MCF 10A (cell line): ENCODE measurements at regions of chr5 and their contacts with region 1.

Region 1: DNA sequence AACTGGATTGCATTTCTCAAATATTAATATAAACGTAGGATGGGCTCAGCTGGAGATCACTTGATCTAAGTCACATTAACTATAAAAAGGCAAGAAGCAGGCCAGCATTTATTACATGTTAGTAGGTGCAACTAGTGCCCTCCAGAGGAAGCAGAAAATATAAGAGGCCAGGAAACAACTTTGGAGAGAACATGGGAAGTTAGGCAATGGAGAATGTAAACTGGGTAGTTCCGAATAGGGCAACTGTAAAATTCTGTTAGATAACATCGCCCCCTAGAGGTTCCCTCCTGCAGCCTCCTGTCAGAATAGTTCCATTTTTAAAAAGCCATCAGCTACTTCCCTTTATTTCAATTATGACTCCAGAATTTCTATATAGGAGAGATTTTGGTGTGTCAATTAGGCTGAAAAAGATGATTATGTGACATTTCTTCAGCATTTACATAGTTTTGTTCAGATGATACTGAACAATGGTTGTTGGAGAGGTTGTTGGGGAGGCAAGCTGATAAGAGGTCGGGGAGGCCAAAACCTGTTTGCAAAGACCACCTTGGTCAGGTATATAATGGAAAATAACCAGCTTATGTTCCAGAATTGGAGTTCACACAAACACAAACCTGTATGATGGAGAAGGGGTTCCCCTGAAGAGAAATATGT is 22.4 kb downstream of the CCL28 start:
- DNase-seq: peak; percentile 90
- H3K4me3 Mint-ChIP-seq: no peak overlapping the region
- H3K27ac Mint-ChIP-seq: no peak overlapping the region
- H3K4me1 Mint-ChIP-seq: no peaks in the 10 kb centered on the region
- H3K27me3 Mint-ChIP-seq: no peaks in the 10 kb centered on the region
- CTCF ChIP-seq: peak; percentile 78

Region 2: GRCh38 chr5:42908509-42909488 is 481.0 kb before region 1 on chr5:
- CTCF ChIA-PET with region 1: interaction called, 49 read pairs
- POLR2A ChIA-PET with region 1: interaction called, 4 read pairs
- intact Hi-C with region 1: loop called (anchors 1 kb)
- DNase-seq: peak; percentile 92
- H3K4me3 Mint-ChIP-seq: peak overlapping the region; percentile 80
- H3K27ac Mint-ChIP-seq: no peak overlapping the region
- H3K4me1 Mint-ChIP-seq: peaks cover 4% of the 10 kb centered on the region
- H3K27me3 Mint-ChIP-seq: no peaks in the 10 kb centered on the region
- CTCF ChIP-seq: peak; percentile 82

Region 3: DNA sequence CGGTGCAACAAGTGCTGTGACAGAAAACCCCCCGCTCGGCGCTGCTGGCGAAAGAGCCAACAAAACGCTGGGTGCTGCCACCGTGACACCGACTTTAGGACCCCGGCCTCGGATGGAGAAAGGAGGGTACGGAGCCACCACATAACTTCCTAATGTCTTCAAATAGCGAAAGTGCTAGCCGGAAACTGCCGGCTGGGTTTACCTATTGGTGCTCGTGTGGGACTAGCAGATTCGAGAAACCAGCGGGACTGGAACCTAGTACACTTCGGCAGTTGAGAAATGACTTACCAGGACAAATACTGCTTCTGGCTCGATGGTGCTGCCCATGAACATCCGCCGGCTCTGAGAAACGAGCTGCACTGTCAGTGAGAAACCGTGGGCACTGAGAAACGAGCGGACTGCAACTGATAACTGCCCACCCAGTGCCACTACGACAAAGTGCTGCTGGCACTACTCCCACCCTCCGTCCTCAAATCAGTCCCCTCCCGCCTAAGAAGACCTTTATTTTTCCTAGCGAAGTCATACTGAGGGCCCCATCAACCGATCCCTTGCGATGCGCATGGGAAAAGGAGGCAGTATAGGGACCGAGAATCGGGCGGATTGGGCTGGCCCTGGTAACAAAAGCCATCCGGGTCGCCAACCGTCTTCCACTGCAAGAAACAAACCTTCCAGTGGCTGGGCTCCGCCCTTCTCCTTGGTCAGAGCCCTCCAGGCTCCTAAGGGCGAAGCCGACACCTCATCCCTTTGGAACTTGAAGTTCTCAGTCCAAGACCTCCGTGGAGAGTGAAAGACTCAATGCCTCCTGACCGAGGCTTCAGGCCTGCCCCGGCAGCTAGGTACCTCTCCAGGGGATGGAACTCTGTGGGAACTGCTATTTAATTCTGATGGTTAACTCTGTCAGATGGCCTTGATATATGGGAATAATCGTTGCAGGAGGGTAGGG is 322.7 kb before region 1 on chr5:
- CTCF ChIA-PET with region 1: interaction called, 6 read pairs
- POLR2A ChIA-PET with region 1: interaction called, 3 read pairs
- intact Hi-C with region 1: loop called (anchors 2 kb)
- DNase-seq: peak; percentile 91
- H3K4me3 Mint-ChIP-seq: peak overlapping the region; percentile 99
- H3K27ac Mint-ChIP-seq: peak overlapping the region; percentile 93
- H3K4me1 Mint-ChIP-seq: peaks cover 12% of the 10 kb centered on the region
- H3K27me3 Mint-ChIP-seq: no peaks in the 10 kb centered on the region
- CTCF ChIP-seq: no peak

Region 4: GRCh38 chr5:43227655-43228054 is 162.1 kb before region 1 on chr5:
- CTCF ChIA-PET with region 1: interaction called, 92 read pairs
- POLR2A ChIA-PET with region 1: interaction called, 3 read pairs
- intact Hi-C with region 1: loop called (anchors 1 kb)
- DNase-seq: peak; percentile 67
- H3K4me3 Mint-ChIP-seq: no peak overlapping the region
- H3K27ac Mint-ChIP-seq: no peak overlapping the region
- H3K4me1 Mint-ChIP-seq: peaks cover 4% of the 10 kb centered on the region
- H3K27me3 Mint-ChIP-seq: no peaks in the 10 kb centered on the region
- CTCF ChIP-seq: peak; percentile 51

Region 5: DNA sequence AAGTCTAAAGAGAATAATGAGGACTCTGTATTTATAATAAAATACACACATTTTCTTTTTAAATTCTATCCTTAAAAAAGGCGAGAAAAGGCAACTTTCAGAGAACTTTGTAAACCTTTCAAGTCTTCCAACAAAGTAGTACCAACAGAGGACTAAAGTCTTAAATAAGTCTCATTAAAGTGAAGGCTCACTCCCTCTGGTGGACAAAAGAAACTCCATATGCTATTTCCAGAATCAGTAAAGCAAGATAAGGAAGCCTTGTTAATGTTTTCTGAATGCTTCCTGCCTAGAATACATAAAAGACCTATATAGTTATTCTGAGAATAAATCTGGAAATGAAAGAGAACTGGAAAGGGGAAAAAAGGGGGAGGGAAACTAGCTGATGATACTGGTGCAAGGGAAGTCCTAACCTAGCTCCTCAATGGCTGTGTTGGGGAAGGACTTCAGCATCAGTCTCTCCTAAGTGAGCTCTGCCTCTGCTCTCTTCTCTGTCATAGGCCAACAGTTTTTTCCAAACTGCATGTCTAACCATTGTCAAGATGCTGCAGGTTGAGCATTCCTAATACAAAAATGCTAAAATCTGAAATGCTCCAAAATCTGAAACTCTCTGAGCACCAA is 83.7 kb before region 1 on chr5:
- CTCF ChIA-PET with region 1: interaction called, 83 read pairs
- POLR2A ChIA-PET with region 1: interaction called, 44 read pairs
- intact Hi-C with region 1: loop called (anchors 1 kb)
- DNase-seq: peak; percentile 68
- H3K4me3 Mint-ChIP-seq: no peak overlapping the region
- H3K27ac Mint-ChIP-seq: peak overlapping the region; percentile 54
- H3K4me1 Mint-ChIP-seq: peaks cover 50% of the 10 kb centered on the region
- H3K27me3 Mint-ChIP-seq: no peaks in the 10 kb centered on the region
- CTCF ChIP-seq: peak; percentile 69

Region 6: GRCh38 chr5:43352131-43352530 is 37.7 kb before region 1 on chr5:
- CTCF ChIA-PET with region 1: interaction called, 10 read pairs
- POLR2A ChIA-PET with region 1: no interaction called
- intact Hi-C with region 1: no loop called
- DNase-seq: no peak
- H3K4me3 Mint-ChIP-seq: no peak overlapping the region
- H3K27ac Mint-ChIP-seq: no peak overlapping the region
- H3K4me1 Mint-ChIP-seq: no peaks in the 10 kb centered on the region
- H3K27me3 Mint-ChIP-seq: no peaks in the 10 kb centered on the region
- CTCF ChIP-seq: no peak

Region 7: GRCh38 chr5:43412156-43412555 is 22.4 kb after region 1 on chr5 and contains the start of gene CCL28:
- CTCF ChIA-PET with region 1: interaction called, 14 read pairs
- POLR2A ChIA-PET with region 1: interaction called, 5 read pairs
- intact Hi-C with region 1: no loop called
- DNase-seq: no peak
- H3K4me3 Mint-ChIP-seq: no peak within 1 kb of the TSS
- H3K27ac Mint-ChIP-seq: no peak within 1 kb of the TSS
- H3K4me1 Mint-ChIP-seq: peaks cover 6% of the 10 kb centered on the region
- H3K27me3 Mint-ChIP-seq: no peaks in the 10 kb centered on the region
- CTCF ChIP-seq: no peak
- total RNA-seq, gene CCL28: 1.6 and 2.2 TPM in 2 replicates